ENCODE measurements at regions of chr11 and their contacts with region 1.

Region 1: GRCh38 chr11:61695917-61696316 is 15.7 kb downstream of the DAGLA start:
- DNase-seq: no peak
- ATAC-seq: peak; percentile 51
- H3K4me3 Mint-ChIP-seq: no peak overlapping the region
- H3K27ac Mint-ChIP-seq: no peak overlapping the region
- H3K4me1 Mint-ChIP-seq: peaks cover 49% of the 10 kb centered on the region
- H3K27me3 Mint-ChIP-seq: no peaks in the 10 kb centered on the region; the same call in 1 of the 2 replicates
- CTCF ChIP-seq: no peak

Region 2: GRCh38 chr11:61671527-61671926 is 24.4 kb before region 1 on chr11:
- CTCF ChIA-PET with region 1: interaction called, 20 read pairs
- POLR2A ChIA-PET with region 1: no interaction called
- DNase-seq: peak; percentile 61
- ATAC-seq: peak; percentile 91
- H3K4me3 Mint-ChIP-seq: no peak overlapping the region
- H3K27ac Mint-ChIP-seq: no peak overlapping the region
- H3K4me1 Mint-ChIP-seq: peaks cover 14% of the 10 kb centered on the region
- H3K27me3 Mint-ChIP-seq: no peaks in the 10 kb centered on the region; the same call in 1 of the 2 replicates
- CTCF ChIP-seq: no peak

Region 3: GRCh38 chr11:61679893-61680621 is 15.9 kb before region 1 on chr11 and contains the start of gene DAGLA:
- CTCF ChIA-PET with region 1: interaction called, 20 read pairs
- POLR2A ChIA-PET with region 1: interaction called, 7 read pairs
- DNase-seq: peak; percentile 72
- ATAC-seq: peak; percentile 69
- H3K4me3 Mint-ChIP-seq: peak within 1 kb of the TSS; percentile 65
- H3K27ac Mint-ChIP-seq: no peak within 1 kb of the TSS
- H3K4me1 Mint-ChIP-seq: peaks cover 15% of the 10 kb centered on the region
- H3K27me3 Mint-ChIP-seq: peaks cover 8% of the 10 kb centered on the region
- CTCF ChIP-seq: peak; percentile 96
- total RNA-seq, gene DAGLA: 3.1 to 3.4 TPM (median 3.4 TPM) in 3 replicates

Region 4: DNA sequence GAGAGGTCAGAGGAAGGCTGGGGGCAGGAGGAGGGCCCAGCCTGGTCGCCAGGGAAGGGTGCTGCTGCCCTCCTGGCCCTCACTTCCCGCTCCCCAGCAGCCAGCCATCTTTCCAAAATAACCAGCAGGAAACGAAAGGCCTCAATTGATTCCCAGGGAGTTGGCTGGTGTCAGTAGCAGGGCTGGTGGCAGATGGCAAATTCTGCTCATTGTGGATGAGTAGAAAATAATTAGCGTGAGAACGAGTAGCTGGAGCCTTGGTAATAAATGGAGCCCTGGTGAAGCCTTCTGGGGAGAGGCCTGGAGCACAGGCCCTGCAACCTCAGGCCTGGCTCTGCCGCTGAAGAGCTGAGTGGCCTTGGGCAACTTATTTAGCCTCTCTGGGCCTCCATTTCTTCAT is 15.6 kb after region 1 on chr11:
- CTCF ChIA-PET with region 1: interaction called, 13 read pairs
- POLR2A ChIA-PET with region 1: no interaction called
- DNase-seq: no peak
- ATAC-seq: no peak
- H3K4me3 Mint-ChIP-seq: no peak overlapping the region
- H3K27ac Mint-ChIP-seq: no peak overlapping the region
- H3K4me1 Mint-ChIP-seq: peaks cover 20% of the 10 kb centered on the region
- H3K27me3 Mint-ChIP-seq: peaks cover 3% of the 10 kb centered on the region; the same call in 1 of the 2 replicates
- CTCF ChIP-seq: no peak

Region 5: GRCh38 chr11:61769169-61769920 is 73.4 kb after region 1 on chr11:
- CTCF ChIA-PET with region 1: no interaction called
- POLR2A ChIA-PET with region 1: no interaction called
- DNase-seq: peak; percentile 44
- ATAC-seq: peak; percentile 29
- H3K4me3 Mint-ChIP-seq: no peak overlapping the region
- H3K27ac Mint-ChIP-seq: no peak overlapping the region
- H3K4me1 Mint-ChIP-seq: peaks cover 12% of the 10 kb centered on the region
- H3K27me3 Mint-ChIP-seq: no peaks in the 10 kb centered on the region
- CTCF ChIP-seq: 0 out of 2 replicates have a peak, but pooled peaks have one; percentile 16

Measured in WTC11 (cell line).